B cell (primary cell): ENCODE measurements at regions of chr11 and their contacts with region 1.

Region 1: DNA sequence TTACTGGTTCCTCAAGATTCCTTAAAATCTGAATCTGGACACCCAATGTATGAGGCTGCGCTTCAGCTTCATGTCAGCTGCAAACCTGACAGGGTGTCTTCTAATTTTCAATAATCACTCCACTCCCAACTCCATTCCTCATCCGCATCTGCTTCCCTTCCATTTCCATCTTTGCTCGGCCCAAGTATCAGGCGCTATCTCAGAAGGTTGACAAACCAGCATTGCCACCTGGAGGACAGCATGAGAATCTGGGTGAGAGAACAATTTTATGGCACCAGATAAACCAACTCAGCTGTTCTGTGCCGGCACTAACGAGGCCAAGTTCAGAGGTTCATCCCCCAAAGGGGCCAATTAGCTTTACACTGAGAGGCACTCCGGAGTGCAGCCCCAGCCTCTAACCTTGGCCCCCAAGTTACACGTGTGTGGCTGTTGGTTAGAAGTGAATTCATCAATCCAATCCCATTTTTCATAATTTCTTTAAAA is 79.1 kb upstream of the LMO2 start:
- DNase-seq: peak; percentile 71
- ATAC-seq: peak; percentile 77
- H3K4me3 ChIP-seq: no peak overlapping the region
- H3K4me3 Mint-ChIP-seq: no peak overlapping the region
- H3K27ac ChIP-seq: no peak overlapping the region
- H3K27ac Mint-ChIP-seq: no peak overlapping the region
- H3K4me1 ChIP-seq: no peaks in the 10 kb centered on the region
- H3K4me1 Mint-ChIP-seq: peaks cover 4% of the 10 kb centered on the region
- H3K27me3 ChIP-seq: no peaks in the 10 kb centered on the region
- H3K27me3 Mint-ChIP-seq: no peaks in the 10 kb centered on the region
- CTCF ChIP-seq: peak; percentile 72

Region 2: DNA sequence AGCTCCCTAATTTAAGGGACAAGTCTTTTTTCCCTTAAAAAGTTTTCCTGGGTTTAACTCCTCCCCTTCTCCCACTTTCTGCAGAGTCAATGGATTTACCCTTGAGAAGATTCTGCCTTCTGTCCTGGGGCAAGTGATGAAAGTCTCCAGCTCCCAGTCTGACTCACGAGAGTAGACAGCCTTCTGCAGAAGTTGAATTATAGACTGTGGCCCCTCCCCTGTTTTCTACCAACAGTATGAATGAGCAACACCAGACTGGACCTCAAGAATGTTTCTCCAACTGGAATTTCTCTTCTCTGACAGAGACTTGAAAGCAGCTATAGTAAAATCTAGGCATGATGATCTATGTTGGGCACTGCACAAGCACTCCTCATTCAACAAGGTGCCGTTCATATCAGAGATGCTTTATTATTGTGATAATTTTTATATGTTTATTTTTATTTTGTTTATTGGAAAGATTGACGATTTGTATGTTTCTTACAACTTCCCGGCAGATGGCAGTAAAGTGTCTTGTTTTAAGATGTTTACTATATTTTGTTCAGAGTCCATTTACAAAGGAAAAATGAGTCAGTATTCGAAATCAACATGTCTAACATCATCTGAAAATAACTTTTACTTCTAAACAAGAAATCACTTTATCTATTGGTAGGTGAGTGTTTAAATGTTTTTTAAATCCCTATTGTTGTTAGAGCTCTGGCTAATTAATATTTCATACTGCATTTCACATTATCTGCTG is 135.7 kb before region 1 on chr11:
- CTCF ChIA-PET with region 1: interaction called, 22 read pairs
- POLR2A ChIA-PET with region 1: no interaction called
- intact Hi-C with region 1: no loop called
- DNase-seq: peak; percentile 18
- ATAC-seq: no peak
- H3K4me3 ChIP-seq: no peak overlapping the region
- H3K4me3 Mint-ChIP-seq: no peak overlapping the region
- H3K27ac ChIP-seq: no peak overlapping the region
- H3K27ac Mint-ChIP-seq: no peak overlapping the region
- H3K4me1 ChIP-seq: no peaks in the 10 kb centered on the region
- H3K4me1 Mint-ChIP-seq: no peaks in the 10 kb centered on the region
- H3K27me3 ChIP-seq: peaks cover 0 to 10% (median 2%) of the 10 kb centered on the region in 4 experiments
- H3K27me3 Mint-ChIP-seq: peaks cover 38% of the 10 kb centered on the region
- CTCF ChIP-seq: peak; percentile 28

Region 3: GRCh38 chr11:33863418-33864172 is 107.4 kb before region 1 on chr11:
- CTCF ChIA-PET with region 1: interaction called, 273 read pairs
- POLR2A ChIA-PET with region 1: no interaction called
- intact Hi-C with region 1: loop called (anchors 1 kb)
- DNase-seq: no peak
- ATAC-seq: no peak
- H3K4me3 ChIP-seq: no peak overlapping the region
- H3K4me3 Mint-ChIP-seq: no peak overlapping the region
- H3K27ac ChIP-seq: no peak overlapping the region
- H3K27ac Mint-ChIP-seq: no peak overlapping the region
- H3K4me1 ChIP-seq: peaks cover 14 to 18% of the 10 kb centered on the region in 2 donors
- H3K4me1 Mint-ChIP-seq: peaks cover 18% of the 10 kb centered on the region
- H3K27me3 ChIP-seq: no peaks in the 10 kb centered on the region
- H3K27me3 Mint-ChIP-seq: no peaks in the 10 kb centered on the region
- CTCF ChIP-seq: no peak

Region 4: DNA sequence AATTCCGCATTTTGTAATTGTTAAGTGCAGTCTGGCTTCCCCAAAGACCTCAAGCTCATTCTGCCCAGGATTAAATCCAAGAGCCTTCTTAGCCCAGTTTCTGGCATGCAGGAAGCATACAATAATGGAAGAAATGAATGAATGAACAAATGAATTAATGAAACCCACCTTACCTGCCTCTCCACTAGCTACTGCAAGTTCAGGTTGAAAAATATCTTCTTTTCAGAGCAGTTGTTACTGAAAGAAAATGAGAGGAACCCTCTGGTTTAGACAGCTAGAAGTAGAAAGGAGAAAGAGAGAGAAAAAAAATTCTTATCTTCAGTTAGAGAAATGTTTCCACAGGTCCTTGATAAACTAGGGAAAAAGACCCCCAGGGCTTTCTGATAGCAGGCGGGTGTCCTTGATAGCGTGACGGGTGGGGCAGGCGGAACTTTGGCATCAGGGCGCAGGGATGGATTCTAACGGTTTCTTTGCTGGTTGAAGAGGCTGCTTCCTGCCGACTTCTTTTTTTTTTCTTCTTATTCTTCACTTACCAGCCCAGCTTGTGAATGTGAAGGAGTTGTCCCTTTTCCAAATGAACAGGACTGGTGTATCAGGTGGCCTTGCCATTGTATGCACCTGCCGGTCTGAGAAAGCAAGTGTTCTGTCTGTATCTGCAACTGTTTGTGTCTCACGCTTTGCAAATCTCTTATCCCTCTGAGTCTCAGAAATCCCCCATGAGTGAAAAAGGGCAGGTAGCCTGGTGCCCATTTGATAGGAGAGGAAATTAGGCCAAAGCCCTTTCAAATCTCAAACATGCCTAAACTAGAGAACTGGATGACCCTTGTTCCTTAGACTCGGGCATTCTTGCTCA is 89.1 kb before region 1 on chr11:
- CTCF ChIA-PET with region 1: interaction called, 10 read pairs
- POLR2A ChIA-PET with region 1: no interaction called
- intact Hi-C with region 1: no loop called
- DNase-seq: no peak
- ATAC-seq: no peak
- H3K4me3 ChIP-seq: no peak overlapping the region
- H3K4me3 Mint-ChIP-seq: no peak overlapping the region
- H3K27ac ChIP-seq: no peak overlapping the region
- H3K27ac Mint-ChIP-seq: no peak overlapping the region
- H3K4me1 ChIP-seq: no peaks in the 10 kb centered on the region
- H3K4me1 Mint-ChIP-seq: peaks cover 11% of the 10 kb centered on the region
- H3K27me3 ChIP-seq: peaks cover 0 to 29% (median 7%) of the 10 kb centered on the region in 4 experiments
- H3K27me3 Mint-ChIP-seq: peaks cover 29% of the 10 kb centered on the region
- CTCF ChIP-seq: no peak

Region 5: DNA sequence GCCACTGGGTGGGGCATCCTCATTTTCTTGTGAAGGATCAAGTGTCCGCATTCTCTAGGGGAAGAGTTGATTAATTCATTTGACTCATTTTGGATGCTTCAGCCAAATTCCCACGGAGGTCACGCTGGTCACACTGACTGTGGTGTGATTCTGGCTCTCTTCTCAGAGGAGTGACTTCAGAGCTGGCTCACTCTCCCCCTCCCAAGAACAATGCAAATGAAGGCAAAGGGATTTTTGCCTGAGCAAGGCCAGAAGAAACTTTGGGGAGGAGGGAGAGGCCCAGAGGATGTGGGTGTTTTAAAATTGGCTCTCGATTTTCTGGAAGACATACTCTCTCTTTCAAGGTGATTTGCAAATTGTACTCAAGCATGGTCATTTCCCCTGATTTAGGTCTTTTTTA is 28.1 kb before region 1 on chr11:
- CTCF ChIA-PET with region 1: interaction called, 12 read pairs
- POLR2A ChIA-PET with region 1: no interaction called
- intact Hi-C with region 1: no loop called
- DNase-seq: no peak
- ATAC-seq: no peak
- H3K4me3 ChIP-seq: no peak overlapping the region
- H3K4me3 Mint-ChIP-seq: no peak overlapping the region
- H3K27ac ChIP-seq: no peak overlapping the region
- H3K27ac Mint-ChIP-seq: no peak overlapping the region
- H3K4me1 ChIP-seq: peaks cover 13 to 25% of the 10 kb centered on the region in 2 donors
- H3K4me1 Mint-ChIP-seq: peaks cover 30% of the 10 kb centered on the region
- H3K27me3 ChIP-seq: no peaks in the 10 kb centered on the region
- H3K27me3 Mint-ChIP-seq: peaks cover 4% of the 10 kb centered on the region
- CTCF ChIP-seq: no peak

Region 6: DNA sequence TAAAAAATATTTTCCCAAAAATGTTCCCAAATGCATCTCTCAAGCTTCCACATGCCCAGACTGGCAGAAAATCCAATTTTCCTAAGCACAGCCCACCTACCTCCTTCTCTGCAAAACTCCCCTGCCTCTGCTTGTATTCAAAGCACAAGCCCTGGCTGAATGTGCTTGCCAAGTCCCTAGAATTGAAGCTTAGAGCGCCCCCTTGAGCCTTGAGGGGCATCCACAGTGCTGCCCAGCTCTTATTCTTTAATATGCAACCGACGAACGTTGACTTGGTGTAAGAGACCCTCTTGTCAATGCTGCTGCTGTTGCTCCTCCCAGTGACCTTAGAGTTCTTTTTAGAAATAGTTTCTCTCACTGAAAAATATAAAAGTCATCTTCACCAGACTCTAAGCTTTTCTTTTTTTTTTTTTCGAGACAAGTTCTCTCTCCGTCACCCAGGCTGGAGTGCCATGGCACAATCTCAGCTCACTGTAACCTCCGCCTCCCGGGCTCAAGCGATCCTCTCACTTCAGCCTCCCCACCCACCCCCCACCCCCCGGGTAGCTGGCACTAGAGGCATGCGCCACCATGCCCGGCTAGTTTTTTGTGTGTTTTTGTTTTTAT is 17.1 kb after region 1 on chr11:
- CTCF ChIA-PET with region 1: interaction called, 31 read pairs
- POLR2A ChIA-PET with region 1: no interaction called
- intact Hi-C with region 1: no loop called
- DNase-seq: peak; percentile 83
- ATAC-seq: peak; percentile 84
- H3K4me3 ChIP-seq: no peak overlapping the region
- H3K4me3 Mint-ChIP-seq: no peak overlapping the region
- H3K27ac ChIP-seq: no peak overlapping the region
- H3K27ac Mint-ChIP-seq: no peak overlapping the region
- H3K4me1 ChIP-seq: no peaks in the 10 kb centered on the region
- H3K4me1 Mint-ChIP-seq: no peaks in the 10 kb centered on the region
- H3K27me3 ChIP-seq: peaks cover 0 to 5% (median 0%) of the 10 kb centered on the region in 4 experiments
- H3K27me3 Mint-ChIP-seq: no peaks in the 10 kb centered on the region
- CTCF ChIP-seq: peak; percentile 86

Region 7: DNA sequence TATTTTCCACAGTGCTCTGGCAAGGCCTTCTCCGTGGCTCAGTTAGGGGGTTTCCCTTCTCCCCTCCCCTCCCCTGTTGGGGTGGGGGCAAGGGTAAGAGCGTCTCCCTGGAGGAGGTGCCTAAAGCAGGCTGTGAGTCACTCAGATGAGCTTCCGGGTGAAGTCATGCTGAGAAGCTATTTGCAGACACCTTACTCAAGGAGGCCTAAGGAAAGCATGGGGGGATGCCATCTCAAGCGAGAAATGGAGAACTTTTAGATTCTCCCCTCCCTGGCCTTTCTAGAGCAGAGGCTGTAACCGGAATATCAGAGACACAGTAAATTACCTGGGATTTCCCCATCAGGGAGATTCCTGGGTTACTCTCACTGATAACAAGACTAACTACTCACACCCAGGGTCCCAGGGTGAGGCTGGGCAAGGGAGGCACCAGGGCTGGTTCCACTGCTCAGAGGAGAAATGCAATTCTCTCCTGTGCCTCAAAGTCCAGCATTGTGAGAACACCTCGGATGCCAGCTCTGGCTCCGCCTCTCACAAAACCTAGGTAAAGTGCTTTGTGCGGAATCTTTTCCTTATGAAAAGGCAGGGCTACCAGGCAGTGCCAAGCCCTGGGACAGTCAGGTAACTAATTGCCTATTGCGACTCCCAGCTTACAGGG is 263.2 kb after region 1 on chr11:
- CTCF ChIA-PET with region 1: no interaction called
- POLR2A ChIA-PET with region 1: no interaction called
- intact Hi-C with region 1: no loop called
- DNase-seq: peak; percentile 87
- ATAC-seq: peak; percentile 93
- H3K4me3 ChIP-seq: no peak overlapping the region
- H3K4me3 Mint-ChIP-seq: peak overlapping the region; percentile 69
- H3K27ac ChIP-seq: peak overlapping the region; percentile 50 to 64
- H3K27ac Mint-ChIP-seq: peak overlapping the region; percentile 84
- H3K4me1 ChIP-seq: peaks cover 15 to 23% of the 10 kb centered on the region in 2 donors
- H3K4me1 Mint-ChIP-seq: peaks cover 41% of the 10 kb centered on the region
- H3K27me3 ChIP-seq: no peaks in the 10 kb centered on the region
- H3K27me3 Mint-ChIP-seq: no peaks in the 10 kb centered on the region
- CTCF ChIP-seq: no peak